GM18951 (cell line): ENCODE measurements at regions of chr21 and their contacts with region 1.

Region 1: GRCh38 chr21:37700641-37701202 is 215.5 kb downstream of the KCNJ6 start:
- POLR2A ChIP-seq: no peak

Region 2: DNA sequence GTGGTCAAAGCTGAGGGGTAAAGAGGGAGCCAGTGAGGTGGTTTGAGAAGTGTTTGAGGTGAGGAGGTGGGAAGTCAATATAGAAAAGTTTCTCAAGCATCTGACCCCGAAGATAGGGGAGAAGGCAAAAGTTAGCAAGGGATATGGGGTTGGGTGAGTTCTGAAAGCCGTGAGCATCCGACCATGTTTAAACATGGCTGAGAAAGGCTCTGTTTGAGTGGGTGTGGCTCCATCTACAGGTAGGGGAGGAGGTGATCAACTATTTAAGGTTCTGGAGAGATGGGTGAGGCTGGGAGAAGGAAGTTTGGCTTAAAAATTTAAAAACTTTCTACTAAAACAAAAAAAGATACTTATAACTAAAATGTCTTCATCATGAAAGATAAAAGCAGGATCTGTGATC is 58.2 kb before region 1 on chr21:
- in situ Hi-C with region 1: no loop called
- POLR2A ChIP-seq: no peak

Region 3: DNA sequence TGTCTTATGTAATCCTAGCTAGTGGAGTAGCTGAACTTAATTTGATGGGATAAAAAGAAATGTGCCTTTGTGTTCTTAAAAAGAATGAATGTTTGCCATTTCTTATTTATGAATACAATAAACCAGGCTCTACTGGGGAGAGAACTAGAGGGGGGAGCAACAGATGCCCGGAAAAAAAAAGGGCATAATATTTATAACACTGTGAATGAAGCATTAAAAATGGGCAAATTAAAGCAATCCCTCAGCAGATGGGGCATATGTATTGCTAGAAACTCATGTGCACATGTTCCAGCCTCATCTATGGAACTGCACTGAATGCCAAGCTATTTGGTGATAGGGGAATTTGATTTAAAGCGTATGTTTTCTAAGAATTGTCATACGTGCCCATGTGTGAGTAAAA is 257.8 kb after region 1 on chr21:
- in situ Hi-C with region 1: no loop called
- POLR2A ChIP-seq: no peak

Region 4: DNA sequence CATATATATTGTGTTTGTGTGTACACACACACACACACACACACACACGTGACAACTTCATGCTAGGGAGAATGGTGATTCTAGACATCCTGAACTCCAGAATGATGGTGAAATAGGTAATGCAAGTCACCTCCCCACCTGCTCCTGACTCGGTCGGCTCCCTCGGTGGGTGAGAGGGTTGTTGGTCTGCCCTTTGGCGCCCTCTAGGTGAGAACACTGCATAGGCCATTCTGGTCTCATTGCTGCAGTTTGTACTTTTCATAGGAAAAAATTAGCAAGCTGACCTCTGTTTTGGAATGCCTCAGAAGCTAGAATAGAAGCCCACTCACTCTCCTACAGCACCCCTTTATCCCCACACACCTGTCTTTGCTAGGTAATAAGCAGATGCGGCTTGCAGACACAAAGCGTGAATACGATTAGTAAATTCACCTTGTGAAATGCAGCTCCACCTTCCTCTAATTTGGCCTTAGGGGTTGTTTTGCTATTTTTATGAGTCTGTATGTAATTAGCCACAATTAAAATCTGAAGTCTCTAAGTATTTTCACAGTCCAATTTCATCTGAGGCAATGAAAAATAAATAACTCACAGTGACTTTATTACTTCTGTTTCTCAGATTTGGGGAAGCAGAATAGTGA is 426.1 kb after region 1 on chr21:
- in situ Hi-C with region 1: loop called (anchors 25 kb)
- POLR2A ChIP-seq: no peak